ENCODE measurements at regions of chr20 and their contacts with region 1.

Region 1: DNA sequence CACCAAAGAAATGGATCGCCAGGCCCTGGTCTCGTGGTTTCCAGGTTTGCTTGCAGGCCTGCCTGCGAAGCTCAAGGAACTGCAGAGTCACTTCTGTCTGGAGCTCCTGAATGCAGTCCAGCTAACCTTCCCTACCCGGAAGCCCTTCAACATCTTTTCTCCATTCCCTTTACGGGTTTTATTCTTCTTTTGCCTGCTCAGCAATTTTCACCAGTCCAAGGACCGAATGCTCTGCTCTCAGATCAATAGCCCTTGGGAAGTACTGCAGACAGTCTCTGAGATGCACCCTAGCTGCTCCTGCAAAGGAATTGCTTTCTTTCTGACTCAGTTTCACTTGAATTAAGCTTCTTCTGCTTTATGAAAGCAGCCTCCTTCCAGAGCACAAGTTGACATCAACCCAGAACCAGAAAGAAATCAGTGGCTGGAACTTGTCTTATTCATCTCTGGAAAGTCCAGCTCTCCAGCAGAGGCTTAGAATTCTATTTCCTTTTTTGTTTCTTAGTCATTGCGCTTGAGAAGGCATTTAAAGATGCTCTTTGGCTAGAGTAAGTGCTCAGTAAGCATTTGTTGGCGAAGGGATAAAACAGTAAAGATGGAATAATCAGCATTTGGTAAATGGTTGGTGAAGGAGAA is 18.7 kb upstream of the YWHAB start:
- DNase-seq: no peak
- ATAC-seq: peak; percentile 19
- H3K4me3 ChIP-seq: no peak overlapping the region
- H3K27ac ChIP-seq: no peak overlapping the region
- H3K4me1 ChIP-seq: peaks cover 0 to 7% of the 10 kb centered on the region in 2 donors
- H3K27me3 ChIP-seq: no peaks in the 10 kb centered on the region
- CTCF ChIP-seq: no peak

Region 2: GRCh38 chr20:44750081-44750805 is 116.6 kb before region 1 on chr20:
- intact Hi-C with region 1: loop called in 1 of 2 experiments (anchors 5 kb)
- DNase-seq: no peak
- ATAC-seq: no peak
- H3K4me3 ChIP-seq: no peak overlapping the region
- H3K27ac ChIP-seq: no peak overlapping the region
- H3K4me1 ChIP-seq: peaks cover 20 to 25% of the 10 kb centered on the region in 2 donors
- H3K27me3 ChIP-seq: peaks cover 0 to 49% of the 10 kb centered on the region in 2 donors
- CTCF ChIP-seq: peak; percentile 24 to 35